ENCODE measurements at regions of chr5 and their contacts with region 1.

Region 1: GRCh38 chr5:53262348-53262970 is 152.9 kb upstream of the MOCS2 start:
- DNase-seq: peak; percentile 45
- H3K4me3 ChIP-seq: no peak overlapping the region
- H3K27ac ChIP-seq: no peak overlapping the region
- H3K4me1 ChIP-seq: no peaks in the 10 kb centered on the region
- H3K27me3 ChIP-seq: no peaks in the 10 kb centered on the region
- CTCF ChIP-seq: peak; percentile 40 to 66
- POLR2A ChIP-seq: no peak

Region 2: GRCh38 chr5:53362521-53362941 is 100.1 kb after region 1 on chr5:
- CTCF ChIA-PET with region 1: interaction called, 3 read pairs
- POLR2A ChIA-PET with region 1: no interaction called
- dilution Hi-C with region 1: no loop called
- intact Hi-C with region 1: loop called (anchors 1 kb)
- DNase-seq: peak; percentile 92
- H3K4me3 ChIP-seq: no peak overlapping the region
- H3K27ac ChIP-seq: peak overlapping the region; percentile 82
- H3K4me1 ChIP-seq: peaks cover 12% of the 10 kb centered on the region
- H3K27me3 ChIP-seq: no peaks in the 10 kb centered on the region
- CTCF ChIP-seq: no peak
- POLR2A ChIP-seq: peak; percentile 46

Region 3: DNA sequence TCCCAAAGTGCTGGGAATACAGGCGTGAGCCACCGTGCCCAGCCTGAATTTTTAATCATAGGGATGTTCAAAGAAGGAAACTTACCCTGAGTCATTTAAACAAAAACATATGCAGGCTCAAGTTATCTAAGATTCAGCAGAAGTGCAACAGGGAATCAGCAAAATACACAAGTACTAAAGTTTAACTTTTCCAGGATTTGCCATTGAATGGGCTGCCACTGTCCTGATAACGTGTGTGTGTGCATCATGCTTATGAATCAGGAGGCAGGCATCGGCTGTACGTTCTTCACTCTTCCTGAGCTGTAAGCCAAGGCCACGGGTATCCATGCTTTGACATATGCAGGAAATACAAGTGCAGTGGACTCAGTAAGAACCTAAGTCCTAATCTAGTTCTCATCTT is 169.2 kb after region 1 on chr5:
- CTCF ChIA-PET with region 1: interaction called, 103 read pairs
- POLR2A ChIA-PET with region 1: no interaction called
- dilution Hi-C with region 1: no loop called
- intact Hi-C with region 1: loop called (anchors 1 kb)
- DNase-seq: no peak
- H3K4me3 ChIP-seq: no peak overlapping the region
- H3K27ac ChIP-seq: no peak overlapping the region
- H3K4me1 ChIP-seq: no peaks in the 10 kb centered on the region
- H3K27me3 ChIP-seq: no peaks in the 10 kb centered on the region
- CTCF ChIP-seq: no peak
- POLR2A ChIP-seq: no peak

Region 4: GRCh38 chr5:54217826-54218503 is 955.5 kb after region 1 on chr5:
- CTCF ChIA-PET with region 1: interaction called, 6 read pairs
- POLR2A ChIA-PET with region 1: no interaction called
- dilution Hi-C with region 1: no loop called
- intact Hi-C with region 1: loop called (anchors 2 kb)
- DNase-seq: peak; percentile 78
- H3K4me3 ChIP-seq: no peak overlapping the region
- H3K27ac ChIP-seq: no peak overlapping the region
- H3K4me1 ChIP-seq: no peaks in the 10 kb centered on the region
- H3K27me3 ChIP-seq: no peaks in the 10 kb centered on the region
- CTCF ChIP-seq: peak; percentile 52 to 65
- POLR2A ChIP-seq: no peak

Region 5: DNA sequence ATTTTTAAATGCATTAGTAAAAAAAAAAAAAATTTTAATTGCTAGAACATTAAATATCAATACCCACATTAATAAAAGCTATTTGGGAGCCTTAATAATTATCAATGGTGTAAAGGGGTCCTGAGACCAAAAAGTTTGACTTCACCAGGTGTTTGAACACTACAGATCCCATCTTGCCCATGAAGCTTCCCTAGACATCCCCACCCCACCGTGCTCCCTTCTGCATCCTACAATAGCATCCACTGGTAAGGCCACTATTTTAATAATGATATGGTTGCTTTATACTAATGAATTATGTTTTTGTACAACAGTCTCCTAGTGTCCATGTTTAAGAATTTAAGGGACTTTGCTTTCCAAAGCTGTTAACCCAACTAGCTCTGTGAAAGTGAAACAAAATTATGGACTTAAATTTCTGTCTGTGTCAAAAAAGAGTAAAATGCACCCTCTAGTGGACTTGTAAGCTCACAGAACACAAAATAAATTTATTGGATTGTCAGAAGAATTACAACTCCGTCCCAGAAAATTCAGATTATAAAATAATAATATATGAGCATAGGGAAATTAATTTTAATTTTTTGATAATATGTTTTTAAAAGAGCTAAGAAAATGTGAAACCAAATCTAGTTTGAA is 972.0 kb after region 1 on chr5:
- CTCF ChIA-PET with region 1: interaction called, 42 read pairs
- POLR2A ChIA-PET with region 1: no interaction called
- dilution Hi-C with region 1: no loop called
- intact Hi-C with region 1: loop called (anchors 1 kb)
- DNase-seq: peak; percentile 38
- H3K4me3 ChIP-seq: no peak overlapping the region
- H3K27ac ChIP-seq: no peak overlapping the region
- H3K4me1 ChIP-seq: no peaks in the 10 kb centered on the region
- H3K27me3 ChIP-seq: peaks cover 0 to 5% of the 10 kb centered on the region in 2 experiments
- CTCF ChIP-seq: peak; percentile 21 to 36
- POLR2A ChIP-seq: no peak

Region 6: DNA sequence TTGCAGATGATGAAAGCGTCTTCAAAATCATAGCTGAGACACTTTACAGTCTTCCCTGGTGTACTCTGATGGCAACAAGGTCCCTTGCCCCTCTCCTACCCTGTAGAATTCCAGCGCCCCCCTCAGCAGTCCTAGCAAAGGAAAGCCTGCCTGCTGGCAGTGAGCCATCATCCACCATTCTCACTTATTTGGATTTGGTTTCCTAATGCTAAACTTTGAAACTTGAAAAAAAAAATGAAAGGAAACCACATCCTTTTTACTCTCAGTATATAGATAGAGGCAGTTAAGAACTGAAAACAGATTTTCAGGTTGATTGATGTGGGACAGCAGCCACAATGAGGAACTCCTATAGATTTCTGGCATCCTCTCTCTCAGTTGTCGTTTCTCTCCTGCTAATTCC is 1839.9 kb after region 1 on chr5 and contains the start of gene GZMA:
- CTCF ChIA-PET with region 1: no interaction called
- POLR2A ChIA-PET with region 1: no interaction called
- dilution Hi-C with region 1: no loop called
- intact Hi-C with region 1: no loop called
- DNase-seq: no peak
- H3K4me3 ChIP-seq: no peak within 1 kb of the TSS
- H3K27ac ChIP-seq: no peak within 1 kb of the TSS
- H3K4me1 ChIP-seq: no peaks in the 10 kb centered on the region
- H3K27me3 ChIP-seq: peaks cover 0 to under 1% of the 10 kb centered on the region in 2 experiments
- CTCF ChIP-seq: no peak
- POLR2A ChIP-seq: no peak
- total RNA-seq, gene GZMA: not detected in 2 replicates